Activated naive CD4-positive, alpha-beta T cell treated with anti-CD3 and anti-CD28 coated beads, Interleukin-2, amount 10 ng/mL, durations not matched to agents 7 days and 5 days (primary cell): ENCODE measurements at regions of chr4 and their contacts with region 1.

Region 1: DNA sequence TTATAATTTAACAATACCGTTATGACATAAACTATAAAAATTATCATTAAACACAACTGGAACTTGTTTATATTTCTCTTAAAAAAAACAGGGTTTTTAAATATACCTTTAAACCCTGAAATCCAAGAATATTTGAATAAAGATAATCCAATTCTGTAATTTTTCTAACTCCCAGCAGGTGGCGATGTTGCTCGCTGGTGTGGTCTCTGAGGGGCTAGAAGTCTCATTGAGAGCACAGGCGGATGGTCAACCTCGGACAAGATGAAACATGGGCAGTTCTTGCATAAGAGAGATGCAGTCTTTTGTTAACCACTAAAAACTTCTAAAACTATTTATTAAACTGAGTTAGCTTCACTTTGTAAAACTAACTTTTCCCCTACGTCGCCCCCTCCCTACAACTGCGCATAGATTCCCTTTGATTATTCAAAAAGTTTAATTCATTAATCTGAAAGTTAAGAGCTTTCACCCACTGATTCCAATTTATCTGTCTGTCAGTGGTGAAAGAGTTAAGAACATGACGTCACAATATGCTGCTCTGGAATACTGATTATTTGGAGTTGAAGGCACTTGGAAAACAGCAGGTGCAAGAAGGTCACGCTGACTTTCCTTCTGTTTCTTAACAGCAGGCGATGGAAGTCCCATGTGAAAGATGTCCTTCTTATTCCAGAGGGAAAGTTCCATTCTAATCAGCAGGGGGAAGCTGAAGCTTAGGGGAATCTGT is 29.5 kb downstream of the DMP1 start:
- DNase-seq: peak; percentile 34
- H3K4me3 Mint-ChIP-seq: no peak overlapping the region
- H3K27ac Mint-ChIP-seq: no peak overlapping the region
- H3K4me1 Mint-ChIP-seq: no peaks in the 10 kb centered on the region
- H3K27me3 Mint-ChIP-seq: no peaks in the 10 kb centered on the region

Region 2: GRCh38 chr4:87848622-87849351 is 169.2 kb after region 1 on chr4:
- CTCF ChIA-PET with region 1: interaction called, 20 read pairs
- DNase-seq: peak; percentile 51
- H3K4me3 Mint-ChIP-seq: no peak overlapping the region
- H3K27ac Mint-ChIP-seq: no peak overlapping the region
- H3K4me1 Mint-ChIP-seq: peaks cover 11% of the 10 kb centered on the region
- H3K27me3 Mint-ChIP-seq: peaks cover 26% of the 10 kb centered on the region